H1 (cell line): ENCODE measurements at regions of chr5 and their contacts with region 1.

Region 1: GRCh38 chr5:143824851-143825720 is 13.1 kb downstream of the HMHB1 start:
- DNase-seq: peak; percentile 80 to 95
- H3K4me3 ChIP-seq: no peak overlapping the region
- H3K27ac ChIP-seq: no peak overlapping the region
- H3K4me1 ChIP-seq: no peaks in the 10 kb centered on the region
- H3K27me3 ChIP-seq: no peaks in the 10 kb centered on the region
- CTCF ChIP-seq: peak; percentile 81 to 94 (median 87)
- EP300 ChIP-seq: no peak
- POLR2A ChIP-seq: no peak
- RAD21 ChIP-seq: peak; percentile 98 to 99

Region 2: GRCh38 chr5:143014017-143014651 is 811.0 kb before region 1 on chr5:
- CTCF ChIA-PET with region 1: interaction called, 11 read pairs
- POLR2A ChIA-PET with region 1: no interaction called
- DNase-seq: peak in 1 of 2 experiments; percentile 86
- H3K4me3 ChIP-seq: no peak overlapping the region
- H3K27ac ChIP-seq: no peak overlapping the region
- H3K4me1 ChIP-seq: peaks cover 0 to 8% (median 0%) of the 10 kb centered on the region in 4 experiments; a peak in 4 of 7 replicates
- H3K27me3 ChIP-seq: no peaks in the 10 kb centered on the region
- CTCF ChIP-seq: peak; percentile 90 to 97 (median 95)
- EP300 ChIP-seq: no peak
- POLR2A ChIP-seq: no peak
- RAD21 ChIP-seq: peak; percentile 97 to 98

Region 3: DNA sequence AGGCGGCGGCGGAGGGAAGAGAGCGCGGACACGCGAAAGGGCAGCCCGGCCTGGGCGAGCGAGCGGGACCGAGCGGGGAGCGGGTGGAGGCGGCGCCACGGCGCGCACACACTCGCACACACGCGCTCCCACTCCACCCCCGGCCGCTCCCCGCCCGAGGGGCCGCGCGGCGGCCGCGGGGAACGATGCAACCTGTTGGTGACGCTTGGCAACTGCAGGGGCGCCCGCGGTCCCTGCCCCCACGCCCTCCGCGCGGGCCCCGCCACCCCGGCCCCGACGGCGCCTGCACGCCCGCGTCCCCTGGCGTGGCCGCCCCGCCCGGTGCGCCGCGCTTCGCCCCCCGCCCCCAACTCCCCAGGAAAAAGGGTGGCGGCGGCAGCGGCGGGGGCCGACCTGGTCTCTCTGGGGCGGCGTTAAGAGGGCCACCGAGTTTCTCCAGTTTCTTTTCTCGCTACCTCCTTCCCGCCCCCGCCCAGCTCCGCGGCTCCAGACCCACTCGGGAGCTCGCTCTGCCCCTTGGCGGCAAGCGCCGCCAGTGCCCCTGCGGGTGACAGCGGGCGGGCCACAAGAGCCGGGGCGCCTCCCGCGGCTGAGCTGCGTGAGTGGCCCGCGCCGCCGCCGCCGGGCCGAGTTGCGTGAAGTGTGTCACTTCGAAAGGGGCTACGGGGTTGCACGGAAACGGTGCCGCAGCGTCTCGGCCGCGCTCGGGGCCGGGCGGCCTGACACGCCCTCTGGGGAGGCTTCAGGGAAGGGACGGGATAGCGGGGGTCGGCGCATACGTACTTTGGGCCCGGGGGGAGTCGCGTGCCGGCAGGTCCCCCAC is 421.3 kb before region 1 on chr5 and contains the start of gene NR3C1:
- CTCF ChIA-PET with region 1: interaction called, 10 read pairs
- POLR2A ChIA-PET with region 1: no interaction called
- DNase-seq: peak in 1 of 2 experiments; percentile 75
- H3K4me3 ChIP-seq: peak within 1 kb of the TSS; percentile 67 to 81 (median 78)
- H3K27ac ChIP-seq: no peak within 1 kb of the TSS
- H3K4me1 ChIP-seq: peaks cover 0 to 11% (median 3%) of the 10 kb centered on the region in 4 experiments; a peak in 5 of 7 replicates
- H3K27me3 ChIP-seq: peaks cover 5 to 27% (median 12%) of the 10 kb centered on the region in 4 experiments; a peak in 6 of 7 replicates
- CTCF ChIP-seq: peak; percentile 26 to 68 (median 46)
- EP300 ChIP-seq: no peak
- POLR2A ChIP-seq: no peak
- RAD21 ChIP-seq: peak; percentile 20 to 45; a peak in 2 of 4 replicates
- total RNA-seq, gene NR3C1: 5.4 and 7.7 TPM in 2 replicates

Region 4: GRCh38 chr5:143850050-143850683 is 25.1 kb after region 1 on chr5:
- CTCF ChIA-PET with region 1: no interaction called
- POLR2A ChIA-PET with region 1: no interaction called
- DNase-seq: no peak
- H3K4me3 ChIP-seq: no peak overlapping the region
- H3K27ac ChIP-seq: no peak overlapping the region
- H3K4me1 ChIP-seq: no peaks in the 10 kb centered on the region
- H3K27me3 ChIP-seq: no peaks in the 10 kb centered on the region
- CTCF ChIP-seq: no peak
- EP300 ChIP-seq: no peak
- POLR2A ChIP-seq: no peak
- RAD21 ChIP-seq: no peak

Region 5: DNA sequence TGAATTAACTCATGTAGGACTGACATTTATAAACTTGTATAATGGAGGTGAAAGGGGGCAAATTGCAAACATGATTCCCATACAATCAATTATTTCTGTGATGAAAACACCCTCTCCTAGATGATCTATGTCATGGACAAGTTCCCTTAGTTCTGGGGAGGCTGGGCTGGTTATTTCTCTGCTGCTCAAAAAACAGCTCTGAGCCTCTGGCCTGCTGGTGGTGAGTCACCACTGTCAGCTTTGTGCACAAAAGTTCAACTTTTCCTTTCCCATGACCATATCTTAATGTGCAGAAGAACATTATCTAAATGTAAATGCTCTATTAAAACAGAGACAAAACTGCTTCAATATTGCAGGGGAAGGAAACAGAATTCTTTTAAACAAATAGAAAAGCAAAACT is 71.9 kb after region 1 on chr5:
- CTCF ChIA-PET with region 1: no interaction called
- POLR2A ChIA-PET with region 1: no interaction called
- DNase-seq: no peak
- H3K4me3 ChIP-seq: no peak overlapping the region
- H3K27ac ChIP-seq: no peak overlapping the region
- H3K4me1 ChIP-seq: peaks cover 0 to 3% (median under 1%) of the 10 kb centered on the region in 4 experiments; a peak in 2 of 7 replicates
- H3K27me3 ChIP-seq: no peaks in the 10 kb centered on the region
- CTCF ChIP-seq: no peak
- EP300 ChIP-seq: no peak
- POLR2A ChIP-seq: no peak
- RAD21 ChIP-seq: no peak

Region 6: DNA sequence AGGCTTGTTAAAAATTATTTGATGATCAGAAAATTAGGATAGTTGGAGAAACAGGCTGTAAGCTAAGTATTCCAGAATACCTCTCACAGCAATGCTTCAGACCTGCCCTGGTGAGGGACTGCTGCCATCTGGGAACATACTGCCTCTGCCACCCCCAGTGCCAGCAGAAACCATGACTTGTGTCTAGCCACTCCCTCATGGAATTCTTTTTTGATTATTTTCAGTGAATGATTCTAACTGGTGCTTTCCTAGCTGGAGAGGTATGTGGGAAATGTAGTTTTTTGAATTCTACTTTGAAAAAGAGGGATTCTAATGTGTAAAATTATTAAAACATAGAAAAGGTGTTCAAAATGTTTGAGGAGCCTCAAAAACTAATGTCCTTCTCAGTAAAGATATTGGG is 113.1 kb after region 1 on chr5:
- CTCF ChIA-PET with region 1: no interaction called
- POLR2A ChIA-PET with region 1: no interaction called
- DNase-seq: no peak
- H3K4me3 ChIP-seq: no peak overlapping the region
- H3K27ac ChIP-seq: no peak overlapping the region
- H3K4me1 ChIP-seq: no peaks in the 10 kb centered on the region
- H3K27me3 ChIP-seq: no peaks in the 10 kb centered on the region
- CTCF ChIP-seq: no peak
- EP300 ChIP-seq: no peak
- POLR2A ChIP-seq: no peak
- RAD21 ChIP-seq: no peak